Common myeloid progenitor, CD34-positive (primary cell): ENCODE measurements at regions of chr3 and their contacts with region 1.

Region 1: GRCh38 chr3:5731094-5731493 is 543.6 kb downstream of the EDEM1 start:
- DNase-seq: peak; percentile 19 to 52 (median 48)
- H3K4me3 ChIP-seq: no peak overlapping the region
- H3K27ac ChIP-seq: no peak overlapping the region
- H3K4me1 ChIP-seq: no peaks in the 10 kb centered on the region
- H3K27me3 ChIP-seq: no peaks in the 10 kb centered on the region

Region 2: GRCh38 chr3:5426094-5426883 is 304.8 kb before region 1 on chr3:
- CTCF ChIA-PET with region 1: interaction called, 14 read pairs
- POLR2A ChIA-PET with region 1: no interaction called
- DNase-seq: peak; percentile 85 to 91 (median 91)
- H3K4me3 ChIP-seq: peak overlapping the region in 1 of 7 experiments; percentile 2
- H3K27ac ChIP-seq: no peak overlapping the region
- H3K4me1 ChIP-seq: peaks cover 22 to 66% (median 52%) of the 10 kb centered on the region in 4 experiments
- H3K27me3 ChIP-seq: no peaks in the 10 kb centered on the region

Region 3: GRCh38 chr3:5699313-5699712 is 31.8 kb before region 1 on chr3:
- CTCF ChIA-PET with region 1: no interaction called
- POLR2A ChIA-PET with region 1: no interaction called
- DNase-seq: no peak
- H3K4me3 ChIP-seq: no peak overlapping the region
- H3K27ac ChIP-seq: no peak overlapping the region
- H3K4me1 ChIP-seq: no peaks in the 10 kb centered on the region
- H3K27me3 ChIP-seq: no peaks in the 10 kb centered on the region

Region 4: DNA sequence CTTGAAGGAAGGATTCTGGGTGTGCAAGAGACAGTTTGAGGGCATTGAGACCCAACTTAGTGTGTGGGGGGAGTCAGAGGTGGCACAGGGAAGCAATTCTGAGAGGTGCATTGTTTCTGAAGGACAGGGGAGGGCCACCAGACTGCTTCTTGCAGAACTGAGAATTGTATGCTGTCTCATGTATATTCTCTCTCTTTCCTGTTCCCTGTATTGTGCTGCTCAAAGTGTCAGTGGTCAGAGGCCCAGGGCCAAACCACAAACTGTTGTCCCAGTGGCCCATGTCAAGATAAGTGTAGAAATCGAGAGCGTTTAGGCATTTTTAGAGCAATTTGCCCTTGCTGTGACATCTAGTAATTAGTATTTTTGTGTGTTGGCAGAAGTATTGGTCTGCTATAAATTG is 23.5 kb after region 1 on chr3:
- CTCF ChIA-PET with region 1: no interaction called
- POLR2A ChIA-PET with region 1: no interaction called
- DNase-seq: peak; percentile 54 to 87 (median 81)
- H3K4me3 ChIP-seq: peak overlapping the region in 5 of 7 experiments; percentile 10 to 52 (median 37)
- H3K27ac ChIP-seq: peak overlapping the region in 1 of 2 experiments; percentile 49
- H3K4me1 ChIP-seq: peaks cover 14 to 49% (median 37%) of the 10 kb centered on the region in 4 experiments
- H3K27me3 ChIP-seq: no peaks in the 10 kb centered on the region